ENCODE measurements at regions of chr14 and their contacts with region 1.

Region 1: DNA sequence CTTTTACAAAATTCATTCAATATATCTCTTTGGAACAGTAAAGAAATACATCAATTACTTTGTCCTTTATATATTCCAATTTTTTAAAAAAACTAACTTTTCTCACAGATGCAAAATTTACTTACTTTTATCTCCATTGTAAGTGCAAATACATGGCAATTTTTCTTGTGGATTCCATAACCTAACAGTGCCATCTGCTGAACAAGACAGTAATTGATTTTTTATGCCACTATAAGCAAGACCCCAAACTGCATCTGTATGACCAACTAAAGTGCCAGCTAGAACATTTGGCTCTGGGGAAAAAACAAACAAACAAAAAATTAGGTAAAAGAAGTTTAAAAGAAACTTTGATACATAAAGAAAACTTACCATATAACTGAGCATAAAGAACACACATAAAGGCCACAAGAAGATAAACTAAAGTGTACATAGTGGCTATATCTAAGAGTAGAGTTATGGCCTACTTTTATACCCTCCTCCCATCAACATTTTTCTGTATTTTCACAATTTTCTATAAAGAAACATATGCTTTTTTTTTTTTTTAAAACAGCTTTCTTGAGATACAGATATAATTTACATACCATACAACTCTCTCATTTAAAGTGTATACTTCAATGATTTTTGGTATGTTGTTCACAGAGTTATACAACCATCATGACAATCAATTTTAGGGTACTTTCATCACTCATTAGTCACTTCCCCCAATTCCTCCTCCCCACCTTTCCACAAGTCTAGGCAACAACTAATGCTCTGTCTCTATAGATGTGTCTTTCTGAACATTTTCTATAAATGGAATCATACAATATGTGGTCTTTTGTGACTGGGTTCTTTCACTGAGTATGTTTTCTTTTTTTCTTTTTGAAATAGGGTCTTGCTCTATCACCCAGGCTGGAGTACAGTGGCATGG is 32.6 kb downstream of the COCH start:
- DNase-seq: no peak
- H3K4me3 ChIP-seq: no peak overlapping the region
- H3K27ac ChIP-seq: no peak overlapping the region
- H3K4me1 ChIP-seq: no peaks in the 10 kb centered on the region
- H3K27me3 ChIP-seq: no peaks in the 10 kb centered on the region
- CTCF ChIP-seq: peak in 3 of 4 experiments; percentile 25 to 40 (median 27)
- POLR2A ChIP-seq: no peak

Region 2: GRCh38 chr14:30656190-30656632 is 250.8 kb before region 1 on chr14:
- intact Hi-C with region 1: loop called (anchors 5 kb)
- DNase-seq: peak; percentile 7
- H3K4me3 ChIP-seq: no peak overlapping the region
- H3K27ac ChIP-seq: no peak overlapping the region
- H3K4me1 ChIP-seq: no peaks in the 10 kb centered on the region
- H3K27me3 ChIP-seq: no peaks in the 10 kb centered on the region
- CTCF ChIP-seq: peak; percentile 21 to 59 (median 56)
- POLR2A ChIP-seq: no peak